ENCODE measurements at regions of chr6 and their contacts with region 1.

Region 1: GRCh38 chr6:79404681-79405156 is 132.5 kb downstream of the LCA5 start:
- DNase-seq: peak; percentile 70
- ATAC-seq: peak; percentile 98
- H3K4me3 ChIP-seq: peak overlapping the region in 1 of 3 experiments; percentile 34; a peak in 2 of 6 replicates
- H3K27ac ChIP-seq: no peak overlapping the region
- H3K4me1 ChIP-seq: peaks cover 36% of the 10 kb centered on the region
- H3K27me3 ChIP-seq: no peaks in the 10 kb centered on the region
- CTCF ChIP-seq: peak; percentile 45
- EP300 ChIP-seq: peak in 1 of 2 experiments; percentile 16; a peak in 1 of 4 replicates
- POLR2A ChIP-seq: no peak
- RAD21 ChIP-seq: peak; percentile 10; the same call in 1 of the 2 replicates

Region 2: DNA sequence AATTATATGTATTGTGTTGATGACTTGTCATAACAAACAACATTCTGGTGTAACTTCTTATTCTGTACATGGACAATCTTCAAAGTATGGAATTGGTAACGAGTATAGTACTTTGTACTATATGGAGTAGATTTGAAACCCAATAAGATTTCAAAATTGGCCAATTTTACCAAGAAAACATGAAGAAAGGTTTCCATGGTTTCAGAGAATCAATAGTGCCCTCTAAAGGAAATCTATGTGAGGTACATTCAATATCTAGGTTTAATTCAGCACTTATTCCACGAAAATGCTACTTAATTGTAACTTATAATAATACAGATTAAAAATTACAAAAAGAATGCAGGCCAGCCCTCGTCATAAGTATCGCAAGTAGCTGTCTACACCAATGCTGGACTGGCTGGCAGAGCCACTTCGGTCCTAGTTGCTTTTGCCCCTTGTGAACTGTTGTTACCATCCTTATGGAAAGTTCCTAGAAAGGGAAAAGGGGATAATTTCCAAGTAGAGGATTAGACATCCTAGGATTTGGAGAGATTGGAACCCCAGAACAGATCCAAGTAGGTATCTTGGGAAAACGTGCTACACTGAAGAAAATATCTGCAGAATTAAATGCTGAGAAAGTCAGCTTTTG is 61.6 kb after region 1 on chr6:
- CTCF ChIA-PET with region 1: no interaction called
- POLR2A ChIA-PET with region 1: no interaction called
- in situ Hi-C with region 1: no loop called
- intact Hi-C with region 1: loop called (anchors 5 kb)
- DNase-seq: no peak
- ATAC-seq: no peak
- H3K4me3 ChIP-seq: no peak overlapping the region
- H3K27ac ChIP-seq: no peak overlapping the region
- H3K4me1 ChIP-seq: peaks cover 76% of the 10 kb centered on the region
- H3K27me3 ChIP-seq: no peaks in the 10 kb centered on the region
- CTCF ChIP-seq: peak; percentile 51
- EP300 ChIP-seq: no peak
- POLR2A ChIP-seq: no peak
- RAD21 ChIP-seq: no peak

Region 3: DNA sequence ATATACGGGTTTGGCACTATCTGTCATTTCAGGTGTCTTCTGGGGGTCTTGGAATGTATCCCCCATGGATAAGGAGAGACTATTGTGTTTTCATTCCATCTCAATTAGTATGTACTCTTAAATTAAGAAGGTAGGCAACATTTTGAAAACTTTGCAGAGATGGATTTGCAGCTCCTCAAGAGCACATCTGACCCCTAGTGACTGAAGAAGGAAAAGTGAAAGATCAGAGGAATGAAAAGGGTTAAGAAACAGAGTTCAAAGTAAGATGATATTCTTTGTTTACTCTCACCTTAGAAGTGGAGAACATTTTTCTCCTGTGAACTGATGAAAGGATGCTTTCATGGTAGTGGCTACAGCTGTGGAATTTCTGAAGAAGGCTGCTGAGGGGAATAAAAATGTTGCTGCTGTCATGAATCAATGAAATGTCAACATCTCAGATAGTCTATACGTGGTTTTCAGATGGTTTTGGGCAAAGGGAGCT is 268.0 kb after region 1 on chr6:
- CTCF ChIA-PET with region 1: no interaction called
- POLR2A ChIA-PET with region 1: no interaction called
- in situ Hi-C with region 1: no loop called
- intact Hi-C with region 1: loop called (anchors 1 kb)
- DNase-seq: peak; percentile 76
- ATAC-seq: peak; percentile 77
- H3K4me3 ChIP-seq: no peak overlapping the region
- H3K27ac ChIP-seq: peak overlapping the region; percentile 2
- H3K4me1 ChIP-seq: peaks cover 68% of the 10 kb centered on the region
- H3K27me3 ChIP-seq: no peaks in the 10 kb centered on the region
- CTCF ChIP-seq: peak; percentile 71
- EP300 ChIP-seq: peak in 1 of 2 experiments; percentile 62; a peak in 2 of 4 replicates
- POLR2A ChIP-seq: no peak
- RAD21 ChIP-seq: 0 out of 2 replicates have a peak, but pooled peaks have one; percentile 17

Measured in HepG2 (cell line).